Activated CD4-positive, alpha-beta T cell treated with anti-CD3 and anti-CD28 coated beads for 36 hours (primary cell): ENCODE measurements at regions of chr4 and their contacts with region 1.

Region 1: GRCh38 chr4:184282251-184282713 is 64.6 kb upstream of the ENPP6 start:
- DNase-seq: peak; percentile 82
- ATAC-seq: peak; percentile 74
- H3K4me3 Mint-ChIP-seq: peak overlapping the region; percentile 56
- H3K27ac Mint-ChIP-seq: peak overlapping the region; percentile 93
- H3K4me1 Mint-ChIP-seq: peaks cover 65% of the 10 kb centered on the region
- H3K27me3 Mint-ChIP-seq: peaks cover 4% of the 10 kb centered on the region

Region 2: DNA sequence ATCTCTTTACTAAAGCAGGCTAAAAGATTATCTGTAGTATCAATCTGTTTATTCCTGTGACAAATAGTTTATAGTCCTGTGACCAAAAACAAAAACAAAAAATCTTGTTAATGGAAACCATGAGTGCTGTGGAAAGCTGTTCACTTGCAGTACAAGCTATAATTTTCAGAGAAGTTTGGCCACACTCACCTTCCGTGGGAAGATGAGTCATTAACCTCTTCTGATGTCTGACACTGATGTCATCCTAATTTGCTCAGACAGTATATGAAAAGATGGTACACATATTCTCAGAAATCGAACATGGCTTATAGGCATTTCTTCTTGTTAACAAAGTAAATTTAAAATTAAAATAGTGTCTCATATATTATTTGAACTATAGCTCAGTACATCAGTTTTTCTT is 44.7 kb before region 1 on chr4:
- CTCF ChIA-PET with region 1: interaction called, 3 read pairs
- POLR2A ChIA-PET with region 1: interaction called, 4 read pairs
- intact Hi-C with region 1: loop called in 1 of 2 experiments (anchors 1 kb)
- DNase-seq: peak; percentile 73
- ATAC-seq: peak; percentile 97
- H3K4me3 Mint-ChIP-seq: peak overlapping the region; percentile 9
- H3K27ac Mint-ChIP-seq: peak overlapping the region; percentile 84
- H3K4me1 Mint-ChIP-seq: peaks cover 28% of the 10 kb centered on the region
- H3K27me3 Mint-ChIP-seq: no peaks in the 10 kb centered on the region

Region 3: GRCh38 chr4:184318852-184319251 is 36.6 kb after region 1 on chr4:
- CTCF ChIA-PET with region 1: interaction called, 6 read pairs
- POLR2A ChIA-PET with region 1: no interaction called
- intact Hi-C with region 1: loop called (anchors 1 kb)
- DNase-seq: no peak
- ATAC-seq: peak; percentile 8
- H3K4me3 Mint-ChIP-seq: no peak overlapping the region
- H3K27ac Mint-ChIP-seq: peak overlapping the region; percentile 59
- H3K4me1 Mint-ChIP-seq: peaks cover 35% of the 10 kb centered on the region
- H3K27me3 Mint-ChIP-seq: peaks cover 3% of the 10 kb centered on the region

Region 4: GRCh38 chr4:184583738-184584502 is 301.6 kb after region 1 on chr4:
- CTCF ChIA-PET with region 1: no interaction called
- POLR2A ChIA-PET with region 1: no interaction called
- intact Hi-C with region 1: loop called in 1 of 2 experiments (anchors 2 kb)
- DNase-seq: peak; percentile 61
- ATAC-seq: peak; percentile 88
- H3K4me3 Mint-ChIP-seq: no peak overlapping the region
- H3K27ac Mint-ChIP-seq: peak overlapping the region; percentile 77
- H3K4me1 Mint-ChIP-seq: peaks cover 25% of the 10 kb centered on the region
- H3K27me3 Mint-ChIP-seq: no peaks in the 10 kb centered on the region

Region 5: GRCh38 chr4:184649026-184649970 is 367.0 kb after region 1 on chr4 and contains the starts of genes CASP3 and PRIMPOL:
- CTCF ChIA-PET with region 1: no interaction called
- POLR2A ChIA-PET with region 1: interaction called, 6 read pairs
- intact Hi-C with region 1: loop called (anchors 2 to 5 kb)
- DNase-seq: peak; percentile 98
- ATAC-seq: peak; percentile 88
- H3K4me3 Mint-ChIP-seq: peak within 1 kb of the TSS; percentile 94
- H3K27ac Mint-ChIP-seq: peak within 1 kb of the TSS; percentile 95
- H3K4me1 Mint-ChIP-seq: peaks cover 51% of the 10 kb centered on the region
- H3K27me3 Mint-ChIP-seq: no peaks in the 10 kb centered on the region
- total RNA-seq, gene CASP3: 44.3 to 65.7 TPM
- total RNA-seq, gene PRIMPOL: 20.4 to 24.3 TPM

Region 6: DNA sequence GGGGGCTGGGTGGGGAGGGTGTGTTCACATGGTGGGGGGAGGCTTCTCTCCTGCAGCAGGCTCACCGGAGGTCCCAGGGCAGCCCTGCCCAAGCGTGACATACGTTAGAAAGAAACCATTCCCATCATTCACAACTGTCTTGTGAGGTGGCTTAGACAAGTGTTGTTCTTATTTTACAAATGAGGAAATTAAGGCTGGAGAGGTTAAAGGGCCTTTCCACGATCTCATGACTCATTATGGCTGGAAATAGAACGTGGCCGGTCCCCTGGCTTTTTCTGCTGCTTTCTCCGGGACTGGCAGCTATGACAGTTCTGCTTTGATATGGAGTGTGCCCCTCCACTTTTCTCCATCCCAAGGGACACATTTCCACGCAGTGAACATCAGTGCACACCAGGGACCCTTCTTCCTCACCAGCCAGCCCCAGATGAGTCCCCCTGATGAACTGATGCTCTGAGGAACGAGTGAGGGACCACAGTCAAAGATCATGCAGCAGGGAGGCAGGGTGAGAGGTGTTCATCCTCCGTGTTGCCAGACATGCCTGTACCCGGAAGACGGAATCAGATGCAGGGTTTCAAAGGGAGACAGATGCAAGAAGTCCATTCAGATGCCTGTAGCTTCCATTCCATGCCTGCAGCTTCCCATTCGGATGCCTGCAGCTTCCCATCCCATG is 607.5 kb after region 1 on chr4:
- CTCF ChIA-PET with region 1: no interaction called
- POLR2A ChIA-PET with region 1: no interaction called
- intact Hi-C with region 1: no loop called
- DNase-seq: no peak
- ATAC-seq: no peak
- H3K4me3 Mint-ChIP-seq: no peak overlapping the region
- H3K27ac Mint-ChIP-seq: no peak overlapping the region
- H3K4me1 Mint-ChIP-seq: no peaks in the 10 kb centered on the region
- H3K27me3 Mint-ChIP-seq: peaks cover 5% of the 10 kb centered on the region

Region 7: GRCh38 chr4:184968784-184969201 is 686.5 kb after region 1 on chr4:
- CTCF ChIA-PET with region 1: no interaction called
- POLR2A ChIA-PET with region 1: no interaction called
- intact Hi-C with region 1: loop called in 1 of 2 experiments (anchors 5 kb)
- DNase-seq: peak; percentile 20
- ATAC-seq: no peak
- H3K4me3 Mint-ChIP-seq: no peak overlapping the region
- H3K27ac Mint-ChIP-seq: no peak overlapping the region
- H3K4me1 Mint-ChIP-seq: peaks cover 6% of the 10 kb centered on the region
- H3K27me3 Mint-ChIP-seq: peaks cover 4% of the 10 kb centered on the region